Activated CD4-positive, alpha-beta T cell treated with anti-CD3 and anti-CD28 coated beads, Interleukin-2, amount 10 ng/mL, durations not matched to agents 7 days and 5 days (primary cell): ENCODE measurements at regions of chr9 and their contacts with region 1.

Region 1: GRCh38 chr9:127943731-127944144 is 6.1 kb upstream of the DPM2 start:
- DNase-seq: peak; percentile 81
- H3K4me3 Mint-ChIP-seq: no peak overlapping the region
- H3K27ac Mint-ChIP-seq: peak overlapping the region; percentile 73
- H3K4me1 Mint-ChIP-seq: peaks cover 55% of the 10 kb centered on the region
- H3K27me3 Mint-ChIP-seq: no peaks in the 10 kb centered on the region

Region 2: GRCh38 chr9:127838375-127839078 is 105.2 kb before region 1 on chr9:
- CTCF ChIA-PET with region 1: no interaction called
- POLR2A ChIA-PET with region 1: no interaction called
- DNase-seq: no peak
- H3K4me3 Mint-ChIP-seq: no peak overlapping the region
- H3K27ac Mint-ChIP-seq: no peak overlapping the region
- H3K4me1 Mint-ChIP-seq: peaks cover 4% of the 10 kb centered on the region
- H3K27me3 Mint-ChIP-seq: no peaks in the 10 kb centered on the region

Region 3: DNA sequence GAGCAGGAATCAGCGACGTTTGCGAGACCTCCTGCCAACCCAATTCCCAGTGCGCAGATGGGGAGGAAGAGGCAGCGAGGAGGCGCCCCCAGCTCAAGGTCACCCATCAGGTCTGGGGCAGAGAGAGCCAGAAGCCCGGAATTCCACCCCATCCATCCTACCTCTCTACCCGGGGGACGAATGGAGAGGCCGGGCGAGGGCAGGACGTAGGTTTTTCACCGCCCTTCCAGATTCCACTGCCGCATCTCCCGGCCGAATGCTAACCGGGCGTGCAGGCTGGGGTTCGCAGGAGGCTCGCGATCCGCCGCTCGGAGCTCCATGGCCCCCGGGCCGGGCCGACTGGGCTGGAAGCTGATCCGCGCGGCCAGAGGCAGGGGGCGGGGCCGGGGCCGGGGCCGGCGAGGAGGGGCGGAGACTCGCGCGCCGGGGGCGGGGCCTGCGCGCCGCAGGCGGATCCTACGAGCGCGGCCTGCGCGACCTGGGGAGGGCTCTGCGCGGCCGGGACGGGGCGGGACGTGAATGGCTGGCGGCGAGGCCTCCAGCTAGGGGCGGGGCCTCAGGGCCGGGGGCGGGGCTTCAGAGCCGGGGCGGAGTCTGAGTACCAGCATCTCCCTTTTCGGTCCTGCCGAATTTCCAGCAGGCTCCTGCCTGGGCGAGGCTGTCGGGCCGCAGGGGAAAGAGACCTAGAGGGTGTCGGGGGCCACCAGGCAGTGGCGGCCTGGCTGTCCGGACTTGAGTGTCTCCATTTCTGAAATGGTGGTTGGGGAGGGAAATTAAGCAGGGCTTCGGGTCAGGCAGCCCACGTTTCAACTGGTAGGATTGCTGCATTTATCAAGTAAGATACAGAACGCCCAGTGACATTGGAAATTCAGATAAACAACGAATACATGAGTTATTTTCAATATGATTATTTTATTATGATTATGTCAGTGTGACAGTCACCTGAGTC is 26.8 kb before region 1 on chr9 and contains the start of gene ST6GALNAC4:
- CTCF ChIA-PET with region 1: interaction called, 17 read pairs
- POLR2A ChIA-PET with region 1: no interaction called
- DNase-seq: peak; percentile 94
- H3K4me3 Mint-ChIP-seq: peak within 1 kb of the TSS; percentile 78
- H3K27ac Mint-ChIP-seq: peak within 1 kb of the TSS; percentile 87
- H3K4me1 Mint-ChIP-seq: peaks cover 62% of the 10 kb centered on the region
- H3K27me3 Mint-ChIP-seq: peaks cover under 1% of the 10 kb centered on the region
- total RNA-seq, gene ST6GALNAC4: 16.8 to 22.4 TPM

Region 4: GRCh38 chr9:127955294-127956035 is 11.7 kb after region 1 on chr9:
- CTCF ChIA-PET with region 1: interaction called, 94 read pairs
- POLR2A ChIA-PET with region 1: no interaction called
- DNase-seq: peak; percentile 80
- H3K4me3 Mint-ChIP-seq: peak overlapping the region; percentile 30
- H3K27ac Mint-ChIP-seq: peak overlapping the region; percentile 68
- H3K4me1 Mint-ChIP-seq: peaks cover 85% of the 10 kb centered on the region
- H3K27me3 Mint-ChIP-seq: no peaks in the 10 kb centered on the region

Region 5: DNA sequence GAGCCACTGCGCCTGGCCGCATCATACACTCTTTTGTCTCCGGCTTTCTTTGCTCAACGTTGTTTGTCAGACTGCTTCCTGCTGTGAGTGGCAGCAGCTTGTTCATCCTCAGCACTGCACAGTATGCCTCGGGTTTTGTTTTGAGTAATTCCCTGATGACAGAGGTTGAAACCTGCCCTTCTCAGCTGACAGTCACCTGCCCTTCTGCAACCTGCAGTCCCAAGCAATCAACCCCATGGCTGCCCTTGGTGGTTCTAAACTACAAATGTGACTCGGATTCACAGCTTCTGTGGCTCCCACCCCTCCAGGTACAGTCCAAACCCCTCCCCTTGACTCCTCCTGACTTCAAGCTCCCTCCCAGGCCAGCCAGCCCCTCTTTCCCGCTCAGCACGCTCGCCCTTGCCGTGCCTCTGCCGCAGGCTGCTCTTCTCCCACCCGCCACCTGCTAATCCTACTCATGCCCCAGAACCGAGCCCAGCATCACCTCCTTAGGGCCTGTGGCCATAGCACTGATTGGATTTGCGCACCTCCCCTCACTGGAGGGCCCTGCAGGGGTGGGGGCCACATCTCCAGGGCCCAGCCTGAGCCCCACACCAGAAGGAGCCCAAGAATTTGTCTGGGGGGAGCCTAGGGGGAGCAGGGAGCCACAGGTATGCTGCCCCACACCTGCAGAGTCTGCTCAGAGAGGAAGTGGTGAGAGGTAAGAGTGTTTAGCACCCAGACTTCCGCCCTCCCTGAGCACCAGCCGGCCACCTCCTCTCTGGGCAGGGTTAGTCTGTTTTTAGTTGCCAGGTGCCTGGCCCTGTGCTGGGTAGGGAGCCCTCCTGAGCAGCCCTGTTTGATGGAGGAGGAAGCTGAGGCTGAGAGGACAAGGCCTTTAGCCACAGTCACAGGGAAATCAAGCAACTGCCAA is 26.9 kb after region 1 on chr9:
- CTCF ChIA-PET with region 1: interaction called, 21 read pairs
- POLR2A ChIA-PET with region 1: no interaction called
- DNase-seq: peak; percentile 83
- H3K4me3 Mint-ChIP-seq: peak overlapping the region; percentile 98
- H3K27ac Mint-ChIP-seq: peak overlapping the region; percentile 94
- H3K4me1 Mint-ChIP-seq: peaks cover 94% of the 10 kb centered on the region
- H3K27me3 Mint-ChIP-seq: no peaks in the 10 kb centered on the region

Region 6: DNA sequence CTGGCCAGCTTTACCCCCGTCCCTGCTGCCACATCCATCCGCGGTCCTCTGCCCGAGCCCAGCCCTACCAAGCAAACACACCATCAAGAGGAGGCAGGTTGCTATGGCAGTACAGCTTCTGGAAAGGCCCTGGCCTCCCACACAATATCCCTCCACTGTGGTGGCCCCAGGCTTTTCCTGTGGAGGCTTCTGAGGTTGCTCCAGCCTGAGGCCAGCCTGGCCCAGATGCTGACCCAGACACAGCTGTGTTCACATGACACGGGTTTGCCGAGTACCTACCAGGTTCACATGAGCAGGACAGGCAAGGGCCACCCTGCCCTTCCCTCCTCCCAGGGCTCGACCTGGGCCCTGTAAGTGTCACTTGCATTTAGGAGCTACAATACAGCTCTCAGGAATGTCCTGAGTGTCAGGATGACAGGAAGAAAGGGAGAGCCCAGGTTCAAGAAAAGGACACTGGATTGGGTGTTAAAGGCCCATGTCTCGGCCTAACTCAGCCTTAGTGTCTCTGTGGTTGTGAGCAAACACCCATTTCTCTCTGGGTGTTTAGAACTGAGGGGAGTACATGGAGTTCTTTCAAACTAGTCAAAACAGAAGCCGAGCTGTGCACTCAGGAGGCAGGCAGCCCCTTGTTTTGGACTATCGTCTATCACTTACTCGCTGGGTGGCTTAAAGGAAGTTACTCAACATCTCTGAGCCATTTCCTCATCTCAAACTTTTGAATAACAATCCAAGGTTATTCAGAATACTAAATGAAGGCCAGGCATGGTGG is 83.2 kb after region 1 on chr9:
- CTCF ChIA-PET with region 1: interaction called, 103 read pairs
- POLR2A ChIA-PET with region 1: interaction called, 4 read pairs
- DNase-seq: peak; percentile 61
- H3K4me3 Mint-ChIP-seq: peak overlapping the region; percentile 81
- H3K27ac Mint-ChIP-seq: peak overlapping the region; percentile 98
- H3K4me1 Mint-ChIP-seq: peaks cover 92% of the 10 kb centered on the region
- H3K27me3 Mint-ChIP-seq: no peaks in the 10 kb centered on the region

Region 7: DNA sequence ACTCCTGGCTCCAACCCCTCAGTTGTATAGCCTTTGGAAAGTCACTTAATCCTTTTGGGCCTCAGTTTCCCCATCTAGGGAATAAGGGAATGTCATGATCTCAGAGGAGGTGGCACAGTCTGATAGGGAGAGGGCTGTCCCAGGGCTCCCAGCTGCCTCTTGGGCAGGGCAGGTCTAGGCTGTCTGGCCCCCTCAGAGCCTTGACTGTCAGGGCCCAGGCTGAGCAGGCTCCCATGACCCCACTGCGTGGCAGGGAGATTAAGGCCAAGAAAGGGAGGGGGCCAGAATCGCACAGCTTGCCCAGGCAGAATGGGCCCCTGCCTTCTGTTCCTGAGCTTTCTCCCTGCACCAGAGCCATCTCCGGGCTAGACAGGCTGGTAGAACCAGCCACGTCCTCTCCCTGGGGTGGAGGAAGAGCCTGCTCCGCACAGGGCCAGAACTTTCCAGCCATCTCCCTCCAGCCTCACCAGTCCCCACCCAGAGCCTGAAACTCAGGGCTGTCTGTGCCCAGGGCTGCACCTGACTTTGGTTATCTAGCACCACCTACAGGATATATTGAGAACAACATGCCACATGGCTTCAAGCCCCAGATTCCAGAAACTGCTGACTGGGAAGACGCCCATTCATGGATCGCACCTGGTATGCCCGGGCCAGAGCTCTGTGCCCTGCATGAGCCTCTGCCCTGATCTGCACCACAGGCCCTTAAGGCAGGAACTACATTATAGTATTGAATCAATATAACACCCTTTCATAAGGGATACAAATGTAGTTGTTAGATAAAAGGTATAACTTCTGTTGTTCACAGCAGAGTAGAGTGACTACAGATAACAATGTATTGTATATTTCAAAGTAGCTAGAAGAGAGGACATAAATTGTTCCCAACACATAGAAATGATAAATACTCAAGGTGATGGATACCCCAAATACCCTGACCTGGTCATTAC is 91.4 kb after region 1 on chr9:
- CTCF ChIA-PET with region 1: interaction called, 103 read pairs
- POLR2A ChIA-PET with region 1: no interaction called
- DNase-seq: peak; percentile 81
- H3K4me3 Mint-ChIP-seq: no peak overlapping the region
- H3K27ac Mint-ChIP-seq: peak overlapping the region; percentile 36
- H3K4me1 Mint-ChIP-seq: peaks cover 42% of the 10 kb centered on the region
- H3K27me3 Mint-ChIP-seq: no peaks in the 10 kb centered on the region

Region 8: GRCh38 chr9:128048663-128049062 is 104.9 kb after region 1 on chr9:
- CTCF ChIA-PET with region 1: interaction called, 13 read pairs
- POLR2A ChIA-PET with region 1: no interaction called
- DNase-seq: no peak
- H3K4me3 Mint-ChIP-seq: no peak overlapping the region
- H3K27ac Mint-ChIP-seq: no peak overlapping the region
- H3K4me1 Mint-ChIP-seq: peaks cover 3% of the 10 kb centered on the region
- H3K27me3 Mint-ChIP-seq: peaks cover 1% of the 10 kb centered on the region

Region 9: DNA sequence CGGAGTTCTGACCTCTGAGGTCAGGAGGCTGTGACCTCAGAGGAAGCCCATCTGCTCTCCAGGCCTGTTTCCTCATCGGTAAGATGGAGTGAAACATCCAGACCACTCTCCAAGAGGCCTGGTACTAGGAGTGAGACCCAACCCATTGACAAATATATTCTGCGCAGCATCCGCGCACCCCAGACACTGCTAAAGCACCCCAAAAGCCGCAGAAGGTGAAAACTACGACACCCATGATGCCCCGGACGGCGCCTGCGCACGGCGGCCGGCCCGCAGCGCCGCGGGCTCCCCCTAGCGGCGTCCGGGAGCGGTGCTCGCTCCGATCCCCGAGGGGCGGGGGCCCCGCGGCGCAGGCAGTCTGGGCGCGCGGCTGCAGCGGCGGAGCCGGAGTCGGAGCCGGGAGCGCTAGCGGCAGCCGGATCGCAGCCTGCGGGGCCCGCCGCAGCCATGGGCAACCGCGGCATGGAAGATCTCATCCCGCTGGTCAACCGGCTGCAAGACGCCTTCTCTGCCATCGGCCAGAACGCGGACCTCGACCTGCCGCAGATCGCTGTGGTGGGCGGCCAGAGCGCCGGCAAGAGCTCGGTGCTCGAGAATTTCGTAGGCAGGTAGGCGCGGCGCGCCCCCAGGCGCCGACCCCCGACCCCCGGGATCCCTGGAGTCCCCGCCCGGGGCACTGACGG is 259.4 kb after region 1 on chr9 and contains the start of gene DNM1:
- CTCF ChIA-PET with region 1: no interaction called
- POLR2A ChIA-PET with region 1: no interaction called
- DNase-seq: peak; percentile 72
- H3K4me3 Mint-ChIP-seq: peak within 1 kb of the TSS; percentile 70
- H3K27ac Mint-ChIP-seq: peak within 1 kb of the TSS; percentile 73
- H3K4me1 Mint-ChIP-seq: peaks cover 10% of the 10 kb centered on the region
- H3K27me3 Mint-ChIP-seq: peaks cover 24% of the 10 kb centered on the region
- total RNA-seq, gene DNM1: 0.60 to 1.0 TPM